ENCODE measurements at regions of chr6 and their contacts with region 1.

Region 1: DNA sequence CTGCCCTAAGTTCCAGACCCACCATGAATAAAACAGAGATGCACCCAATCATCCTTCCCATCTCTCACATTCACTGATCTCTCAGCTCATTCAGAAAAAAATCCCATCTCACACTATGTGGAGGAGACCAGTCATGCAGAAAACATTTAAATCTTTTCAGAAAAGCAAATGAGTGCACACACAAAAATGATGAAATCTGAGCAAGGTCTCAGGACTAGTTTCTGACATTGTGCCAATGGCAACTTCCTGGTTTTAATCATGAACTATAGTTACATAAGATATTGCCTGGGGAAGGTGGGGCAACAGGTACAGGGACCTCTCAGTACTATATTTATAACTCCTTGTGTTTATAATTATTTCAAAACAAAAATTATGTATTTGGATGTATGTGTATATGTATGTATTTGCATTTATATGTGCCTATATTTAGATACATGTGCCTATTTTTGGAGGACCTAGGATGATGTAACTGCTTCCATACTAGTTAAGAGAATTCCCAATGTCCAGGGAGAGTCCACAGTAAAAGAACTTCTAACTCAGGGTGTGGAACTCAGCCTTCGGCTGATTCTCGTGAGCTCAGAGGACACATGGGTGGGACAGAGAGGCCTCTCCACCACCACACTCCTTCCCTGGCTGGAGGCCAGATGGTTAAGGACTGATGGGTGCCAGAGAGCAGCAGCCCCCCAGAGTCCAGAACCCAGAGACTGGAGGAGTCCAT is 71.7 kb upstream of the MAP3K4 start:
- DNase-seq: no peak
- ATAC-seq: peak; percentile 63 to 75
- H3K4me3 ChIP-seq: no peak overlapping the region
- H3K27ac ChIP-seq: no peak overlapping the region
- H3K4me1 ChIP-seq: no peaks in the 10 kb centered on the region
- H3K27me3 ChIP-seq: peaks cover 4% of the 10 kb centered on the region
- CTCF ChIP-seq: no peak

Region 2: GRCh38 chr6:160595838-160596832 is 323.7 kb before region 1 on chr6:
- intact Hi-C with region 1: no loop called
- DNase-seq: no peak
- ATAC-seq: no peak
- H3K4me3 ChIP-seq: no peak overlapping the region
- H3K27ac ChIP-seq: no peak overlapping the region
- H3K4me1 ChIP-seq: no peaks in the 10 kb centered on the region
- H3K27me3 ChIP-seq: no peaks in the 10 kb centered on the region
- CTCF ChIP-seq: no peak

Region 3: GRCh38 chr6:160679402-160679769 is 240.5 kb before region 1 on chr6:
- intact Hi-C with region 1: no loop called
- DNase-seq: no peak
- ATAC-seq: peak; percentile 45 to 81
- H3K4me3 ChIP-seq: no peak overlapping the region
- H3K27ac ChIP-seq: no peak overlapping the region
- H3K4me1 ChIP-seq: no peaks in the 10 kb centered on the region
- H3K27me3 ChIP-seq: no peaks in the 10 kb centered on the region
- CTCF ChIP-seq: no peak

Region 4: DNA sequence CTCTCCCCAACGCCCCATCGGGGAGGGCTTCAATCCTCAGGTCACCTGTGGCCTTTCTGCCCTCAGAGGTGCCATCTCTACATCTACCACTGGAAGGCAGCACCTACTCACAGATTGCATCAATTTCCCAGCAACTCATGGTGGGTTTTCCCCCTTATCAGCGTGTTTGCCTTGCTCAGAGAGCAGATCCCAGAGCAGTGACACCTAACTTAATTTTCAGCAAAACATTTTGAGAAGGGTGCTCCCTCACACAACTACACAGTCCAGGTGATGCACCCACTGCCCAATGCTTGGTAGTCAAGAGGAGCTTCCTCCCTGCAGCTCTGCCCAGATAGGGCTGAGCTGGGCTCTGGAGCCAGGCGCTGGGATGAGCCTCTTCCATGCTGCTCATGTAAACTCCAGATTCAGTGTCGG is 169.6 kb before region 1 on chr6:
- intact Hi-C with region 1: no loop called
- DNase-seq: no peak
- ATAC-seq: no peak
- H3K4me3 ChIP-seq: no peak overlapping the region
- H3K27ac ChIP-seq: no peak overlapping the region
- H3K4me1 ChIP-seq: no peaks in the 10 kb centered on the region
- H3K27me3 ChIP-seq: no peaks in the 10 kb centered on the region
- CTCF ChIP-seq: peak; percentile 16

Region 5: GRCh38 chr6:160775792-160776580 is 143.9 kb before region 1 on chr6:
- intact Hi-C with region 1: no loop called
- DNase-seq: no peak
- ATAC-seq: no peak
- H3K4me3 ChIP-seq: no peak overlapping the region
- H3K27ac ChIP-seq: no peak overlapping the region
- H3K4me1 ChIP-seq: no peaks in the 10 kb centered on the region
- H3K27me3 ChIP-seq: no peaks in the 10 kb centered on the region
- CTCF ChIP-seq: no peak

Region 6: GRCh38 chr6:161370880-161371279 is 451.0 kb after region 1 on chr6:
- intact Hi-C with region 1: loop called (anchors 10 kb)
- DNase-seq: no peak
- ATAC-seq: peak; percentile 66
- H3K4me3 ChIP-seq: no peak overlapping the region
- H3K27ac ChIP-seq: no peak overlapping the region
- H3K4me1 ChIP-seq: peaks cover 17% of the 10 kb centered on the region
- H3K27me3 ChIP-seq: no peaks in the 10 kb centered on the region
- CTCF ChIP-seq: peak; percentile 84